ENCODE measurements at regions of chr14 and their contacts with region 1.

Region 1: DNA sequence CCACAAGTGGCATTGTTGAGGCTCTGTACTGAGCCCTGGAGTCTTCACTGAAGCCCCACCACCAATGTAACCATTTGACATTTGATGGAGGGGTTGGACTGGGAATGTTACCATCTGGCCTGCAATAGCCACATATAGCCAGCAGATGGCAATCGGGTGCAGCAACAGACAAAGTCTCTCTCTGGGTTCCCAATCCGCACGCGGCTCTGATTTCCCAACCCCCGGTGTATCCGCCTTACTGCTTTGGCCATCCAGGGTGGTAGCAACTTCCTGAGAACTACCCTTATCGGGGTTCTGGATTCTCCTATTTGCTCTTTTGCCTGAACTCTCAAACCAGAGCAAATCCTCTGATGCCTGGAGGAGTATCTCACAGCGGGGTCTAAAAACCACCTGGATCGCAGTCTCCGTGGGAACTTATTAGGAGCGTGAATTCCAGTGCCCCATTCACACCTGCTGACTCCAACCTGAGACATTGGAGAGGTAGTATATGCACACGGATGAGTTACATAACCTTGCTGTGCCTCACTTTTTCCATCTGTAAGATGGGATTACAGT is 14.2 kb downstream of the VRTN start:
- DNase-seq: peak; percentile 66 to 83 (median 72)
- ATAC-seq: peak; percentile 90
- H3K4me3 ChIP-seq: no peak overlapping the region
- H3K4me1 ChIP-seq: no peaks in the 10 kb centered on the region
- CTCF ChIP-seq: peak; percentile 95

Region 2: GRCh38 chr14:74281069-74281468 is 81.4 kb before region 1 on chr14:
- intact Hi-C with region 1: no loop called
- DNase-seq: no peak
- ATAC-seq: no peak
- H3K4me3 ChIP-seq: no peak overlapping the region
- H3K4me1 ChIP-seq: no peaks in the 10 kb centered on the region
- CTCF ChIP-seq: no peak

Region 3: GRCh38 chr14:74478996-74479635 is 116.7 kb after region 1 on chr14:
- intact Hi-C with region 1: loop called (anchors 10 kb)
- DNase-seq: no peak
- ATAC-seq: no peak
- H3K4me3 ChIP-seq: no peak overlapping the region
- H3K4me1 ChIP-seq: no peaks in the 10 kb centered on the region
- CTCF ChIP-seq: no peak

Region 4: DNA sequence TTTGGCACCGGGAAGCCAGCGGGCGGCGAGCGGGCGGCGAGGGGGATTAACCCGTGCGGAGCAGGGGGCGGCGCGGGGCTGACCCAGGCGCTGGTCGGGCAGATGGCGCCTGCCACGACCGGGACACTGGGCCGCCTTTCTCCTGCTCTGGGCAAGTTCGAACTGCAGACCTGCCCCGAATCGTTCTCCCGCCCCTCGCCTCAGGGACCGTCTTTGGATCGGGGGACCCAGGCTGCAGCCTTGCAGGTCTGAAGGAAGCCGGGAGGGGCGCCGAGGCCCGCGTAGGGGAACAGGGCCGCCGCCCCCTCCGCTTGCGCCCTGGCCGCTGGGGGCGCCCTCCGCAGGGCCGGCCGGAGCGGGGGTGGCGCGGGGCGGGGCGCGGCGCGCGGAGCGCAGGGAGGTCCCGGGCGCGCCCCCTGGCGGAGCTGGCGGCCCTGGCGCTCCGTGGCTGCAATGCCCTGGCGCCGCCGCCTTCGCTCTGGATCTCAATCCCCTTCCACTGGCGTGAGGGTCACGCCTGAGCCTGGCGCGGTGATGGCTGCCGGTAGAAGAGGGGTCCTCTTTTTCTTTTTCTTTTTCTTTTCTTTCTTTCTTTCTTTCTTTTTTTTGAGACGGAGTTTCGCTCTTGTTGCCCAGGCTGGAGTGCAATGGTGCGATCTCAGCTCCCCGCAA is 250.0 kb after region 1 on chr14:
- intact Hi-C with region 1: loop called in 1 of 2 experiments (anchors 5 kb)
- DNase-seq: peak; percentile 82 to 84 (median 84)
- ATAC-seq: peak; percentile 92
- H3K4me3 ChIP-seq: no peak overlapping the region
- H3K4me1 ChIP-seq: peaks cover 9% of the 10 kb centered on the region
- CTCF ChIP-seq: peak; percentile 83

Measured in mucosa of descending colon (tissue), 3 donors.